ENCODE measurements at regions of chr1 and their contacts with region 1.

Region 1: GRCh38 chr1:229156872-229157271 is 114.0 kb upstream of the RAB4A start:
- DNase-seq: no peak
- ATAC-seq: peak in 3 of 4 donors; percentile 57 to 83 (median 66)
- H3K4me3 ChIP-seq: no peak overlapping the region
- H3K27ac ChIP-seq: no peak overlapping the region
- H3K4me1 ChIP-seq: no peaks in the 10 kb centered on the region
- H3K27me3 ChIP-seq: no peaks in the 10 kb centered on the region
- CTCF ChIP-seq: peak; percentile 45

Region 2: DNA sequence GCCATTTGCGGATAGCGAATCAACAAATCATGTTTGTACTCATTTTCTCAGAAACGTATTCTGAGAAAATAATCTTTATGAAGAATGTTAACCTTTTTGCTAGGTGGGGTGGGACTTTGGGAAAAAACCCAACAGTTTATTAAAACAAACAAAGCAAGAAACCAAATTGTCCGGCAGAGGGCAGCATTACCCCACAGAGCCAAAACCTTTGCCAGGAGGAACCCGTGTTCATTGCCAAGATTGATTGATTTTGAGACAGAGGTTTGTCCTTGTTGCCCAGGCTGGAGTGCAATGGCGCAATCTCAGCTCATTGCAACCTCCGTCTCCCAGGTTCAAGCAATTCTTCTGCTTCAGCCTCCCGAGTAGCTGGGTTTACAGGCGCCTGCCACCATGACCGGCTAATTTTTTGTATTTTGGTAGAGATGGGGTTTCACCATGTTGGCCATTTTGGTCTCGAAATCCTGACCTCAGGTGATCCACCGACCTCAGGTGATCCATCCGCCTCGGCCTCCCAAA is 492.4 kb before region 1 on chr1:
- intact Hi-C with region 1: loop called in 1 of 2 experiments (anchors 2 kb)
- DNase-seq: peak; percentile 62 to 81
- ATAC-seq: peak in 2 of 4 donors; percentile 32 to 73
- H3K4me3 ChIP-seq: no peak overlapping the region
- H3K27ac ChIP-seq: no peak overlapping the region
- H3K4me1 ChIP-seq: no peaks in the 10 kb centered on the region
- H3K27me3 ChIP-seq: peaks cover 0 to 2% (median 0%) of the 10 kb centered on the region in 3 donors
- CTCF ChIP-seq: peak; percentile 85

Region 3: GRCh38 chr1:228684607-228685006 is 472.3 kb before region 1 on chr1:
- intact Hi-C with region 1: loop called (anchors 5 to 10 kb)
- DNase-seq: no peak
- ATAC-seq: no peak
- H3K4me3 ChIP-seq: no peak overlapping the region
- H3K27ac ChIP-seq: no peak overlapping the region
- H3K4me1 ChIP-seq: no peaks in the 10 kb centered on the region
- H3K27me3 ChIP-seq: peaks cover 0 to 21% (median 0%) of the 10 kb centered on the region in 3 donors
- CTCF ChIP-seq: no peak